Left ventricle myocardium inferior (tissue), 1 donor: ENCODE measurements at regions of chr1 and their contacts with region 1.

Region 1: GRCh38 chr1:234980645-234981396 is 147.8 kb downstream of the TOMM20 start:
- DNase-seq: peak; percentile 74
- H3K4me3 ChIP-seq: peak overlapping the region; percentile 36
- H3K27ac ChIP-seq: peak overlapping the region; percentile 89
- H3K4me1 ChIP-seq: peaks cover 70% of the 10 kb centered on the region
- H3K27me3 ChIP-seq: no peaks in the 10 kb centered on the region
- CTCF ChIP-seq: no peak

Region 2: DNA sequence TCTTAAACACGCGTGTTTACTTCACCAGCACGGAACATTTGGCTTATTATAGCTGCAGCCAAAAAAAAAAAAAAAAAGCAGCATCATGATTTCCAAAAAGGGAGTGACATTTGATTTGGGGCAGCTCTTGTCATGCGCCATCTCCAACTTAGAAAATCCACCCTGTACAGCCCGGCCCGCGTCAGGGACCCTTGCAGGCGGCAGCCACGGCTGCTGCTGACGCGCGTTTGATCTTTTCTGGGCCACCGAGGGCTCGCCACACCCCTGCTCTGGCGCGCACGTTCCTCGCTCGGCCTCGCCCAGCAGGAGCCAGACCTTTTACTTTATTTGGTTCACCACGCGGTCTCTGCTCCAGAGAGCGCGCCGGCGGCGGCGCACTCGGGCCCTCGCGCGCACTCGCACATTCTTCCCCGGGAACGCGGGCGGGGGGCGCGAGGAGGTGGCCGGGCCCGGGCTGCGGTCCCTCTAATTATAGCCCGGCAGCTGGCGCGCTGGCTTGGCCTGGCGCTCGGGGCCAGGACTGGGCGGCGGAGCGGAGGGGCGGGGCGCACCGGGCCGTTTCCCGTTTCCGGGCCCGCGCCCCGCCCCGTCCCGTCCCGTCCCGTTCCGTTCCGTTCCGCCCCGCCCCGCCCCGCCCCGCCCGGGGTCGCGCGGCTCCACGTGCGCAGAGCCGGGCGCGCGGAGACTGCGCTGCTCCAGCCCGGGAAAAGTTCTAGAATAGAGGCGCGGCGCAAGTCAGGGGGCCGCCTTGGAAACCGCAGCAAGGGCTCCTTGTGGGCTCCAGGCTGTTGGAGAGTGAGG is 381.0 kb before region 1 on chr1:
- intact Hi-C with region 1: loop called (anchors 10 kb)
- DNase-seq: peak; percentile 92
- H3K4me3 ChIP-seq: peak overlapping the region; percentile 87
- H3K27ac ChIP-seq: peak overlapping the region; percentile 100
- H3K4me1 ChIP-seq: peaks cover 65% of the 10 kb centered on the region
- H3K27me3 ChIP-seq: no peaks in the 10 kb centered on the region
- CTCF ChIP-seq: no peak